ENCODE measurements at regions of chr17 and their contacts with region 1.

Region 1: GRCh38 chr17:72976971-72977770 is 115.3 kb downstream of the SLC39A11 start:
- DNase-seq: peak; percentile 82
- ATAC-seq: peak; percentile 76
- H3K4me3 ChIP-seq: peak overlapping the region; percentile 37 to 49
- H3K27ac ChIP-seq: peak overlapping the region; percentile 93
- H3K4me1 ChIP-seq: peaks cover 31 to 47% of the 10 kb centered on the region in 2 experiments
- H3K27me3 ChIP-seq: no peaks in the 10 kb centered on the region
- CTCF ChIP-seq: no peak
- POLR2A ChIP-seq: no peak
- RAD21 ChIP-seq: no peak

Region 2: GRCh38 chr17:72826602-72827001 is 150.6 kb before region 1 on chr17:
- CTCF ChIA-PET with region 1: no interaction called
- POLR2A ChIA-PET with region 1: no interaction called
- RAD21 ChIA-PET with region 1: no interaction called
- intact Hi-C with region 1: loop called (anchors 10 kb)
- DNase-seq: peak; percentile 42
- ATAC-seq: peak; percentile 71; the same call in 1 of the 2 replicates
- H3K4me3 ChIP-seq: no peak overlapping the region
- H3K27ac ChIP-seq: no peak overlapping the region
- H3K4me1 ChIP-seq: peaks cover 7 to 21% of the 10 kb centered on the region in 2 experiments; a peak in 3 of 4 replicates
- H3K27me3 ChIP-seq: no peaks in the 10 kb centered on the region
- CTCF ChIP-seq: peak; percentile 3 to 64 (median 33); a peak in 4 of 6 replicates
- POLR2A ChIP-seq: no peak
- RAD21 ChIP-seq: no peak

Region 3: GRCh38 chr17:72890711-72891110 is 86.5 kb before region 1 on chr17:
- CTCF ChIA-PET with region 1: no interaction called
- POLR2A ChIA-PET with region 1: no interaction called
- RAD21 ChIA-PET with region 1: no interaction called
- intact Hi-C with region 1: loop called (anchors 5 kb)
- DNase-seq: no peak
- ATAC-seq: no peak
- H3K4me3 ChIP-seq: no peak overlapping the region
- H3K27ac ChIP-seq: peak overlapping the region; percentile 15; the same call in 1 of the 2 replicates
- H3K4me1 ChIP-seq: peaks cover 46 to 53% of the 10 kb centered on the region in 2 experiments
- H3K27me3 ChIP-seq: no peaks in the 10 kb centered on the region
- CTCF ChIP-seq: no peak
- POLR2A ChIP-seq: no peak
- RAD21 ChIP-seq: no peak